ENCODE measurements at regions of chr17 and their contacts with region 1.

Region 1: GRCh38 chr17:2090804-2091534 is 36.1 kb downstream of the HIC1 start:
- DNase-seq: no peak
- H3K4me3 Mint-ChIP-seq: peak overlapping the region; percentile 83
- H3K27ac Mint-ChIP-seq: peak overlapping the region; percentile 9
- H3K4me1 Mint-ChIP-seq: peaks cover 59% of the 10 kb centered on the region
- H3K27me3 Mint-ChIP-seq: no peaks in the 10 kb centered on the region

Region 2: GRCh38 chr17:2070241-2071023 is 20.5 kb before region 1 on chr17:
- CTCF ChIA-PET with region 1: interaction called, 27 read pairs
- POLR2A ChIA-PET with region 1: interaction called, 82 read pairs
- intact Hi-C with region 1: loop called (anchors 1 kb)
- DNase-seq: peak; percentile 93
- H3K4me3 Mint-ChIP-seq: peak overlapping the region; percentile 60
- H3K27ac Mint-ChIP-seq: peak overlapping the region; percentile 93
- H3K4me1 Mint-ChIP-seq: peaks cover 48% of the 10 kb centered on the region
- H3K27me3 Mint-ChIP-seq: peaks cover 2% of the 10 kb centered on the region

Region 3: GRCh38 chr17:2222901-2223616 is 132.1 kb after region 1 on chr17:
- CTCF ChIA-PET with region 1: no interaction called
- POLR2A ChIA-PET with region 1: interaction called, 3 read pairs
- intact Hi-C with region 1: loop called (anchors 5 kb)
- DNase-seq: peak; percentile 81
- H3K4me3 Mint-ChIP-seq: peak overlapping the region; percentile 57
- H3K27ac Mint-ChIP-seq: peak overlapping the region; percentile 83
- H3K4me1 Mint-ChIP-seq: peaks cover 37% of the 10 kb centered on the region
- H3K27me3 Mint-ChIP-seq: no peaks in the 10 kb centered on the region

Measured in activated CD4-positive, alpha-beta memory T cell treated with anti-CD3 and anti-CD28 coated beads for 36 hours (primary cell).